Adrenal gland (tissue), 19 donors: ENCODE measurements at regions of chr17 and their contacts with region 1.

Region 1: DNA sequence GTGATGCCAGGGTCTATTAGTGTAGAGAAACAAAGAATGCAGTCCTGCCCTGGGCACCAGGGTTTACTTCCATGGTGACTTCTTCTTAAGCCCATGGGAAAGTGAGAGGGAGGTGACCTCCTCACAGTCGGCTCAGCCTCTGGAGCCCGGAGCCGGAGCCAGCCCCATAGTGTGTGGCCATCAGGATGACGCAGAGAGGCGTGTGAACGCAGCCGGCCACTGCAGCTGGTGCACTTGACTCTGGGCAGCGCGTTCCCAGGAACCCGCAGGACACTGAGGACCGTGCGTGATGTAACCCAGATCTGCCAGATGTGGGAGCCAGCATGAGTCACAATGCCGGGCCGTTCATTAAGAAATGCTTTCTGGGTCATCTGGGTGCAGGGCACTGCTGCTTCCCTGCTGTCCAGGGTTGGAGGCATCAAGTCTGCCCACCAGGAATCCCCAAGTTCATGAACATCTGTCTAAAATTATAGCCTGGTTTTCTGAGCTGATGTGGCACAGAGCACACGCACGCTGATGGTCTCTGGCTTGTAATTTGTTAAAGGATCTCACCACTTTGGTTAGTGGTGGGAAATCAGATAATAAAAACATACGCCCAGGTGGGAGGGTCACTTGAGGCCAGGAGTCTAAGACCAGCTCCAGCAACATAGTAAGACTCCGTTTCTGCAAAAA is 114.1 kb downstream of the PITPNC1 start:
- DNase-seq: peak; percentile 92 to 99 (median 97)
- H3K4me3 ChIP-seq: peak overlapping the region in 1 of 4 donors; percentile 27
- H3K27ac ChIP-seq: peak overlapping the region; percentile 50 to 87 (median 81)
- H3K4me1 ChIP-seq: peaks cover 12 to 23% of the 10 kb centered on the region in 2 donors
- H3K27me3 ChIP-seq: no peaks in the 10 kb centered on the region
- CTCF ChIP-seq: no peak
- POLR2A ChIP-seq: peak; percentile 65 to 95

Region 2: GRCh38 chr17:67441052-67441927 is 49.9 kb before region 1 on chr17:
- intact Hi-C with region 1: no loop called
- DNase-seq: peak; percentile 25 to 80 (median 52)
- H3K4me3 ChIP-seq: peak overlapping the region in 1 of 4 donors; percentile 32
- H3K27ac ChIP-seq: peak overlapping the region in 2 of 5 donors; percentile 45 to 49
- H3K4me1 ChIP-seq: peaks cover 0 to 20% of the 10 kb centered on the region in 2 donors
- H3K27me3 ChIP-seq: no peaks in the 10 kb centered on the region
- CTCF ChIP-seq: no peak
- POLR2A ChIP-seq: no peak

Region 3: GRCh38 chr17:67602956-67603355 is 111.8 kb after region 1 on chr17:
- intact Hi-C with region 1: loop called in 1 of 2 experiments (anchors 10 kb)
- DNase-seq: peak in 5 of 7 donors; percentile 29 to 68 (median 39)
- H3K4me3 ChIP-seq: no peak overlapping the region
- H3K27ac ChIP-seq: no peak overlapping the region
- H3K4me1 ChIP-seq: peaks cover 12 to 37% of the 10 kb centered on the region in 2 donors
- H3K27me3 ChIP-seq: no peaks in the 10 kb centered on the region
- CTCF ChIP-seq: peak; percentile 20 to 51 (median 41)
- POLR2A ChIP-seq: no peak